Activated naive CD4-positive, alpha-beta T cell treated with anti-CD3 and anti-CD28 coated beads, Interleukin-2, amount 10 ng/mL, durations not matched to agents 7 days and 5 days (primary cell): ENCODE measurements at regions of chr7 and their contacts with region 1.

Region 1: GRCh38 chr7:141072548-141073172 is 1.2 kb upstream of the TMEM178B start:
- DNase-seq: peak; percentile 55
- H3K4me3 Mint-ChIP-seq: peak overlapping the region; percentile 68
- H3K27ac Mint-ChIP-seq: no peak overlapping the region
- H3K4me1 Mint-ChIP-seq: peaks cover 26% of the 10 kb centered on the region
- H3K27me3 Mint-ChIP-seq: no peaks in the 10 kb centered on the region

Region 2: GRCh38 chr7:140966561-140967226 is 106.0 kb before region 1 on chr7:
- CTCF ChIA-PET with region 1: no interaction called
- DNase-seq: no peak
- H3K4me3 Mint-ChIP-seq: no peak overlapping the region
- H3K27ac Mint-ChIP-seq: no peak overlapping the region
- H3K4me1 Mint-ChIP-seq: no peaks in the 10 kb centered on the region
- H3K27me3 Mint-ChIP-seq: peaks cover 11% of the 10 kb centered on the region

Region 3: GRCh38 chr7:141533149-141533949 is 460.7 kb after region 1 on chr7:
- CTCF ChIA-PET with region 1: interaction called, 10 read pairs
- DNase-seq: peak; percentile 73
- H3K4me3 Mint-ChIP-seq: no peak overlapping the region
- H3K27ac Mint-ChIP-seq: no peak overlapping the region
- H3K4me1 Mint-ChIP-seq: no peaks in the 10 kb centered on the region
- H3K27me3 Mint-ChIP-seq: peaks cover 37% of the 10 kb centered on the region